Prostate gland (tissue), 2 donors: ENCODE measurements at regions of chr5 and their contacts with region 1.

Region 1: GRCh38 chr5:102782311-102782770 is 27.2 kb downstream of the PAM start:
- DNase-seq: no peak
- H3K4me3 ChIP-seq: no peak overlapping the region
- H3K27ac ChIP-seq: no peak overlapping the region
- H3K4me1 ChIP-seq: no peaks in the 10 kb centered on the region
- H3K27me3 ChIP-seq: no peaks in the 10 kb centered on the region
- CTCF ChIP-seq: no peak
- POLR2A ChIP-seq: no peak

Region 2: GRCh38 chr5:102865510-102866236 is 83.3 kb after region 1 on chr5:
- intact Hi-C with region 1: loop called (anchors 5 kb)
- DNase-seq: peak; percentile 38
- H3K4me3 ChIP-seq: peak overlapping the region; percentile 45 to 47
- H3K27ac ChIP-seq: peak overlapping the region; percentile 69 to 73
- H3K4me1 ChIP-seq: no peaks in the 10 kb centered on the region
- H3K27me3 ChIP-seq: no peaks in the 10 kb centered on the region
- CTCF ChIP-seq: peak in 1 of 4 experiments; percentile 9
- POLR2A ChIP-seq: no peak

Region 3: DNA sequence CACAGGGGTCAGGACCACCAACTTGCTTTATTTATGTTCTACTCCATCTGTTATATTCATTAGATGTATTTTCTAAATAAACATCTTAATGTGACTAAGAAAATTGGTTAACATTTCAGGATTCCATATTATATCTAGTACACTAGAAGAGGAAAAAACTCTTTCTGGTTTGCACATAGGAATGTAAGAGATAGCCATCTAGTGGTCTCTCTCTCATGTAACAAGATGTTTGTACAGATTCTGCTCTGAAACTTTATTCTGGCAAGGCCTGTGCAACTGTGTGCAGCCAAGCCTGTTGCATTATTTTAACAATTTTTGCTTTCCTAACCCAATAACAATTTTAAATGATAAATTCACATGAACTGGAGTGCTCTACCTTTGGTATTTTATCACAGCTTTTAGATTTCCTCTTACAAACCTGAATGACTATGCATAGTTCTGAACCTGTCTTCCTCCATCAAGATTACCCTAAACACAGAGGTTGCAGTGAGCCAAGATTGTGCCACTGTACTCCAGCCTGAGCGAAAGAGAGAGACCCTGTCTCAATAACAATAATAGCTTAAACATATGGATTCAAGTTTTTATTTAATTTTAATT is 189.5 kb after region 1 on chr5:
- intact Hi-C with region 1: loop called (anchors 2 kb)
- DNase-seq: no peak
- H3K4me3 ChIP-seq: no peak overlapping the region
- H3K27ac ChIP-seq: no peak overlapping the region
- H3K4me1 ChIP-seq: no peaks in the 10 kb centered on the region
- H3K27me3 ChIP-seq: no peaks in the 10 kb centered on the region
- CTCF ChIP-seq: peak in 3 of 4 experiments; percentile 37 to 47 (median 43)
- POLR2A ChIP-seq: no peak